CD8-positive, alpha-beta T cell (primary cell): ENCODE measurements at regions of chr15 and their contacts with region 1.

Region 1: DNA sequence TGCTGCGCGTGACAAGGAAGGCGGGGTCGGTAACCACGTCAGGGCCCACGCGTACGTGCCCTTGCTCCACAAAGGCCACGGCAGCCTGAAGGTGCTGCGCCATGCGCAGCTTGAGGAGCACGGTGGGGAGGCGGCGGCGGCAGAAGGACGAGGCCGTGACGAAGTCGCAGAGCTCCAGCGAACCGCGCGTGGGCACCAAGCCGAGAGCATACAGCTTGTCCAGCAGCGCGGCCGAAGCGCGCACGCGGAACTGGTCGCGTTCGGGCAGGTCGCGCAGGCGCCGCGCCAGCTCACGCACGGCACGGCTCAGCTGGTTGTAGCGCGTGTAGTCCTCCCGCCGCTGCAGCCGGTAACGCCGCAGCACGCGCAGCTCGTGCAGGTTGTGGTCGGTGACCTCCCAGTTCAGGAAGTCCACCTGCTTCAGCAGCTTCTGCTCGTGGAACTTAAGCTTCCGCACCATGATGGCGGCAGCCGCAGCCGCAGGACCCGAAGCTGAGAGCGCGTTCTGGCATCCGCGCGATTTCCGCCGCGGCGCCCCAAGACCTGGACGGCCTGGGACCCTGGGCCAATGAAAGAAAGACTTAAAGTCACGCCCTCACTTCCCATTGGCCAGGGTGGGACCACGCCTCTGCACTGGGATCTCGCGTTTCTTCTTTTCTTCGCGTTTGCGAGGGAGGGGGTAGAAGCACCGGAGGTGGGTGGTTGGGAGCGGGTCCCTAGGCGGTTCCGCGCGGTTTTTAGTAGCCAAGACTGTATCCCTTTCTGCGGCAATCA is at the start of gene IMP3:
- DNase-seq: peak; percentile 81 to 98 (median 94)
- ATAC-seq: peak; percentile 90
- H3K4me3 ChIP-seq: peak within 1 kb of the TSS; percentile 80 to 99
- H3K4me3 Mint-ChIP-seq: peak within 1 kb of the TSS; percentile 91
- H3K27ac ChIP-seq: peak within 1 kb of the TSS; percentile 79 to 98
- H3K27ac Mint-ChIP-seq: peak within 1 kb of the TSS; percentile 97
- H3K4me1 ChIP-seq: peaks cover 31% of the 10 kb centered on the region
- H3K4me1 Mint-ChIP-seq: peaks cover 41% of the 10 kb centered on the region
- H3K27me3 ChIP-seq: no peaks in the 10 kb centered on the region
- H3K27me3 Mint-ChIP-seq: no peaks in the 10 kb centered on the region
- CTCF ChIP-seq: no peak
- total RNA-seq, gene IMP3: 67.1 to 69.5 TPM

Region 2: GRCh38 chr15:74768771-74769342 is 871.0 kb before region 1 on chr15:
- CTCF ChIA-PET with region 1: no interaction called
- POLR2A ChIA-PET with region 1: no interaction called
- intact Hi-C with region 1: no loop called
- DNase-seq: peak in 6 of 9 experiments; percentile 58 to 77 (median 70)
- ATAC-seq: peak; percentile 65
- H3K4me3 ChIP-seq: no peak overlapping the region
- H3K4me3 Mint-ChIP-seq: no peak overlapping the region
- H3K27ac ChIP-seq: no peak overlapping the region
- H3K27ac Mint-ChIP-seq: no peak overlapping the region
- H3K4me1 ChIP-seq: peaks cover 17% of the 10 kb centered on the region
- H3K4me1 Mint-ChIP-seq: peaks cover 21% of the 10 kb centered on the region
- H3K27me3 ChIP-seq: no peaks in the 10 kb centered on the region
- H3K27me3 Mint-ChIP-seq: peaks cover 4% of the 10 kb centered on the region
- CTCF ChIP-seq: peak; percentile 71

Region 3: GRCh38 chr15:74787251-74788041 is 852.5 kb before region 1 on chr15:
- CTCF ChIA-PET with region 1: interaction called, 3 read pairs
- POLR2A ChIA-PET with region 1: no interaction called
- intact Hi-C with region 1: loop called in 1 of 2 experiments (anchors 10 kb)
- DNase-seq: peak; percentile 81 to 97 (median 92)
- ATAC-seq: peak; percentile 71
- H3K4me3 ChIP-seq: peak overlapping the region; percentile 83 to 98
- H3K4me3 Mint-ChIP-seq: peak overlapping the region; percentile 83
- H3K27ac ChIP-seq: peak overlapping the region; percentile 53 to 90
- H3K27ac Mint-ChIP-seq: peak overlapping the region; percentile 92
- H3K4me1 ChIP-seq: peaks cover 76% of the 10 kb centered on the region
- H3K4me1 Mint-ChIP-seq: peaks cover 71% of the 10 kb centered on the region
- H3K27me3 ChIP-seq: no peaks in the 10 kb centered on the region
- H3K27me3 Mint-ChIP-seq: no peaks in the 10 kb centered on the region
- CTCF ChIP-seq: peak; percentile 62

Region 4: DNA sequence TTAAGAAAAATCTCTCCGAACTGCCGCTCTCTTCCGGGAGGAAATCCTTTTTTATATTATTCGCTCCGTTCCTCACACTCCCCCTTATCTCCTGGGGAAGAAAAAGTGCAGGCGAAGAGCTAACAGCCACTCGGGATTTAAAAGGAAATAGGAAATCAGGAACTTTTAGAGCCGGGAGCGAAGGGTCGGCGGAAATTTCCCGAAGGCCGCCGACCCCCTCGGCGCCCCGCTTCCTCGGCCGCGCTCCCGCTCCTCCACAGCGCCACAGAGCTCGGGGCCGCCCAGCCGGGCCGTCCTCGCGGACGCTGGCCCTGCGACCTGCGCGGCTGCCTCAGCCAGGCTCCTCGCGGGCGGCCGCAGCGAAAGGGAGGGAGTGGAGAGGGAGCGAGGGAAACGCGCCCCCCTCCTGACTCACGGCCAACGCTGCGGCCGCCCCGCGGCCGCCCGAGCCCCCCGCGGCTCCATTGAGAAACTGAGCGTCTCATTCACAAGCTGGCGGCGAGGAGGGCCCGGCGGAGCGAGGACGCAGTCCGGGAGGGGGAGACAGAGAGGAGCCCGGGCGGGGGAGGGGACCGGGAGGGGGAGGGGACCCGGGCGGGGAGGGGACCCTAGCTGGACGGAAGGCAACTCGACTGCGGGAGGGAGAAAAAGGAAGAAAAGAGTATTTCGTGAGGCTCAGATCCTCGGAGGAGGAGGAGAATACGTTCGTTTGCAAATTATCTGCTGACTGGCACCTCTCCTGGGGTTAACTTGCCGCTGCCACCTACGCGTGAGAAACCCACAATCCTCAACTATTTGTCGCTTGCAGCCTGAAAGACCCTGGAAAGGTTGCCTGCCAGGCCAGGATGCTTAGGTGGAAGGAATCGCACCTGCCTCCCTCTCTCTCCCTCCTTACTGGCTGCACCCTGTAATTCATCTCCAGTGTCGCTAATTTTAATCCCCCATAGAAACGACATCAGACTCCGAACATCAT is 60.7 kb before region 1 on chr15 and contains the start of gene PTPN9:
- CTCF ChIA-PET with region 1: interaction called, 6 read pairs
- POLR2A ChIA-PET with region 1: interaction called, 27 read pairs
- intact Hi-C with region 1: loop called (anchors 1 to 2 kb)
- DNase-seq: peak; percentile 24 to 81 (median 68)
- ATAC-seq: peak; percentile 83
- H3K4me3 ChIP-seq: peak within 1 kb of the TSS; percentile 77 to 83
- H3K4me3 Mint-ChIP-seq: peak within 1 kb of the TSS; percentile 94
- H3K27ac ChIP-seq: peak within 1 kb of the TSS; percentile 25 to 73
- H3K27ac Mint-ChIP-seq: peak within 1 kb of the TSS; percentile 86
- H3K4me1 ChIP-seq: peaks cover 14% of the 10 kb centered on the region
- H3K4me1 Mint-ChIP-seq: peaks cover 23% of the 10 kb centered on the region
- H3K27me3 ChIP-seq: no peaks in the 10 kb centered on the region
- H3K27me3 Mint-ChIP-seq: no peaks in the 10 kb centered on the region
- CTCF ChIP-seq: peak; percentile 43
- total RNA-seq, gene PTPN9: 4.8 to 5.6 TPM

Region 5: GRCh38 chr15:75606711-75607699 is 32.9 kb before region 1 on chr15:
- CTCF ChIA-PET with region 1: interaction called, 8 read pairs
- POLR2A ChIA-PET with region 1: interaction called, 25 read pairs
- intact Hi-C with region 1: no loop called
- DNase-seq: peak in 6 of 9 experiments; percentile 8 to 63 (median 38)
- ATAC-seq: peak; percentile 76
- H3K4me3 ChIP-seq: peak overlapping the region; percentile 9 to 13
- H3K4me3 Mint-ChIP-seq: peak overlapping the region; percentile 50
- H3K27ac ChIP-seq: peak overlapping the region; percentile 35 to 67
- H3K27ac Mint-ChIP-seq: peak overlapping the region; percentile 82
- H3K4me1 ChIP-seq: peaks cover 42% of the 10 kb centered on the region
- H3K4me1 Mint-ChIP-seq: peaks cover 48% of the 10 kb centered on the region
- H3K27me3 ChIP-seq: no peaks in the 10 kb centered on the region
- H3K27me3 Mint-ChIP-seq: no peaks in the 10 kb centered on the region
- CTCF ChIP-seq: no peak

Region 6: GRCh38 chr15:75738647-75739331 is 98.9 kb after region 1 on chr15:
- CTCF ChIA-PET with region 1: no interaction called
- POLR2A ChIA-PET with region 1: no interaction called
- intact Hi-C with region 1: loop called in 1 of 2 experiments (anchors 2 kb)
- DNase-seq: peak; percentile 70 to 92 (median 89)
- ATAC-seq: peak; percentile 91
- H3K4me3 ChIP-seq: peak overlapping the region; percentile 67 to 79
- H3K4me3 Mint-ChIP-seq: peak overlapping the region; percentile 84
- H3K27ac ChIP-seq: peak overlapping the region in 1 of 2 experiments; percentile 51
- H3K27ac Mint-ChIP-seq: peak overlapping the region; percentile 70
- H3K4me1 ChIP-seq: peaks cover 14% of the 10 kb centered on the region
- H3K4me1 Mint-ChIP-seq: peaks cover 14% of the 10 kb centered on the region
- H3K27me3 ChIP-seq: peaks cover 0 to 4% of the 10 kb centered on the region in 2 experiments
- H3K27me3 Mint-ChIP-seq: peaks cover 3% of the 10 kb centered on the region
- CTCF ChIP-seq: no peak

Region 7: GRCh38 chr15:75809986-75810750 is 170.3 kb after region 1 on chr15:
- CTCF ChIA-PET with region 1: no interaction called
- POLR2A ChIA-PET with region 1: no interaction called
- intact Hi-C with region 1: no loop called
- DNase-seq: peak in 2 of 9 experiments; percentile 33 to 41
- ATAC-seq: no peak
- H3K4me3 ChIP-seq: no peak overlapping the region
- H3K4me3 Mint-ChIP-seq: no peak overlapping the region
- H3K27ac ChIP-seq: no peak overlapping the region
- H3K27ac Mint-ChIP-seq: no peak overlapping the region
- H3K4me1 ChIP-seq: no peaks in the 10 kb centered on the region
- H3K4me1 Mint-ChIP-seq: no peaks in the 10 kb centered on the region
- H3K27me3 ChIP-seq: no peaks in the 10 kb centered on the region
- H3K27me3 Mint-ChIP-seq: peaks cover 4% of the 10 kb centered on the region
- CTCF ChIP-seq: no peak